Posterior vena cava (tissue), 2 donors: ENCODE measurements at regions of chr6 and their contacts with region 1.

Region 1: DNA sequence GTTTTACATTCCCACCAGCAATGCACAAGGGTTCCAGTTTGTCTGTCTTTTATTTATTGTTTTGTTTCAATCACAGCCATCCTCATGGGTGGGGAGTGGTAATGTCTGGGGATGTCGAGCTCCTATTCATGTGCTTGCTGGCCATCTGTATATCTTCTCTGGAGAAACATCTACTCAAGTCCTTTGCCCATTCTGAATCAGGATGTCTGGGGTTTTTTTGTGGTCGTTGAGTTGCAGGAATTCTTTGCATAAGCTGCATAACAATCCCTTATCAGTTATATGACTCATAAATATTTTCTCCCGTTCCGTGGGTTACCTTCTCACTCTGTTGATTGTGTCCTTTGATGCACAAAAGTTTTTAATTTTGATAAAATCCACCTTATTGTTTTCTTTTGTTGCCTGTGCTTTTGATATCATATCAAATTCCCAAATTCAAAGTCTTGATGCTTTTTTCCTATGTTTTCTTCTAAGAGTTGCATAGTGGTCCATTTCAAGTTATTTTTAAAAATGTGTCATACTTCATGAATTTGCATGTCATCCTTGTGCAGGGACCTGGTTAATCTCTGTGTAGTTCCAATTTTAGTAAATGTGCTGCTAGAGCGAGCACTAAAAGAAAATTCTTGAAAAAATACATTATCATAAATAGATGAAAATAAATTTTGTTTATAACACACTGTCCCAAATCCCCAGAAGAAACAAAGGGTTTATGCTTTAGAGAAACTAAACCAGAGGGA is 54.9 kb upstream of the PDE10A start:
- DNase-seq: no peak

Region 2: GRCh38 chr6:164546263-164546662 is 1171.6 kb before region 1 on chr6:
- intact Hi-C with region 1: no loop called
- DNase-seq: no peak

Region 3: DNA sequence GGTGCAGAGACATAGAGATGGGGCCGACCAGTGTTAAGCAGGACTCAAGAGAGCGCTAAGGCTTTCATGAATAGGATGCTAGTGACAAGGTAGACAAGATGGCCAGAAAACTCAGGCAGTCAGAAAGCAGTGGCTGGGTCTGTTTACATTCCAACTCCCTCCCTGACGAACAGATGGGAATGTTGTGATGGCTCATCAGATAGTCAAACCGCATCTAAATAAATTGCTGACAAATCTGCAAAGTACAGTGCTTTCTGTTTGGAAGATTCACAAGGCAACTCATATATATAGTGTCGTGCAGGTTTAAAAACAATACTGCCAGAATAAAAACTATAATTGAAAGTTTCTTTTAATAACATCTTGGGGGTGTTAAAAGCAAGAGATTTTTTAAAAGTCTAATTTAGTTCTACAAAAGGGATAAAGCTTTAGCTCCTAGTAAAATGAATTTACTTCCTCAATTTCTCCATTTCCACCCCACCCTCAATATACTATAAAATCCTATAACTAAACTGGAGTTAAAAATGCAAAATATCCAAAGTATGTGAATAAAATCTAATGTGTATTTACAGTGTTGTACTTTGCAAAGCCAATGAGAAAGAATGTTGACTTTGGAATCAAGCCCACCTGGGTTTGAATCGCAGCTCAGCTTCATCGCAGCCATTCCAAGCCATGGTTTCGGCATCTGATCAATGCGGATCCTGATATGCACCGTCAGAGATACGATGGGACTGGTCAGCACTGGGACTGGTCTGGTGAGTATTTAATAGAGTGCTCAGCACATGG is 192.5 kb after region 1 on chr6:
- intact Hi-C with region 1: loop called in 1 of 2 experiments (anchors 5 kb)
- DNase-seq: no peak